WTC11 (cell line): ENCODE measurements at regions of chr7 and their contacts with region 1.

Region 1: DNA sequence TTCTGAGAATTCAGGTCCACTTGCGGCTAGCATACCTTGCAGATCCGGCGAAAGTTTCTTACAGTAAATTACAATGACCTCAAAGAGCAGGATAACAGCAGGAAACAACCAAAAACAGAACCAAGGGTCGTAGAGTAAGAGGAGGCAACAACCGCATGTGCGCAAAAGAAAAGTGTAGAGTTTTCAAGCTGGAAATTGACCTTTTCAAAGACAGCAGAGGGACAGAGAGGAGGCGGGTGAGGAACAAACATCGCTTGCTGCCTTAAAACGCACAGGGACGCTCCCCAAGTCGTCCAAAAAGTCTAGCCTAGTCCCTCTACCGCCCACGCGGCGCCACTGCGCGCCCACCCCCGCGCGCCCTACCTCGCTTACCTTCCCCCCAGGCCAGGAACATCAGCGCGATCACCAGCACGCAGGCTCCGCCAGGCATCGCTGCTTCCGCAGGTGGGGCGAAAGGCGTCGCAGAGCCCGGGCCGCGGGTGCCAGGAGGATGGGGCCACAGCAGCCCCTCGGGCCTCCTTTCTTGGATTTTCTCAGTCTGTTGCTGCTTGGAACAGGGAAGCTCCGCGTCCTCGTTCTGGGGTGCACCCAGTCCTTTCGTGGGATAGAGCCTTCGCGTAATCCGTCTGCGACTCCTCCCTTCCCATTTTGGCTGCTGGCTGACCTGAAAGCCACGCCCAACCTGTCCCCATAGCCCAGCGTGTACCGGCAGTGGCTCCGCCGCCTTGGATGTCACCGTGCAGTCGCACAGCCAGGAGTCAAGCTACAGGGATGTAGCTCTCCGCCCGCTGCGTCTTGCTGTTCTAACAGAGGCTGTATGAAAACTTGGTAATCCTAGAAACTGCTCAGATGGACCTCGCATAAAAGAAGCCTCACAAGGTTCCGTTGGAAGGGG is at the start of gene VWDE:
- DNase-seq: peak; percentile 79
- ATAC-seq: peak; percentile 93
- H3K4me3 Mint-ChIP-seq: peak within 1 kb of the TSS; percentile 98
- H3K27ac Mint-ChIP-seq: peak within 1 kb of the TSS; percentile 97
- H3K4me1 Mint-ChIP-seq: peaks cover 38% of the 10 kb centered on the region
- H3K27me3 Mint-ChIP-seq: peaks cover 8% of the 10 kb centered on the region
- CTCF ChIP-seq: no peak
- total RNA-seq, gene VWDE: 21.0 to 25.1 TPM (median 23.1 TPM) in 3 replicates

Region 2: GRCh38 chr7:12423355-12423994 is 19.9 kb after region 1 on chr7:
- CTCF ChIA-PET with region 1: interaction called, 7 read pairs
- POLR2A ChIA-PET with region 1: interaction called, 10 read pairs
- DNase-seq: no peak
- ATAC-seq: no peak
- H3K4me3 Mint-ChIP-seq: peak overlapping the region; percentile 53
- H3K27ac Mint-ChIP-seq: peak overlapping the region; percentile 98
- H3K4me1 Mint-ChIP-seq: peaks cover 39% of the 10 kb centered on the region
- H3K27me3 Mint-ChIP-seq: no peaks in the 10 kb centered on the region
- CTCF ChIP-seq: no peak